Endothelial cell of umbilical vein (primary cell): ENCODE measurements at regions of chr2 and their contacts with region 1.

Region 1: DNA sequence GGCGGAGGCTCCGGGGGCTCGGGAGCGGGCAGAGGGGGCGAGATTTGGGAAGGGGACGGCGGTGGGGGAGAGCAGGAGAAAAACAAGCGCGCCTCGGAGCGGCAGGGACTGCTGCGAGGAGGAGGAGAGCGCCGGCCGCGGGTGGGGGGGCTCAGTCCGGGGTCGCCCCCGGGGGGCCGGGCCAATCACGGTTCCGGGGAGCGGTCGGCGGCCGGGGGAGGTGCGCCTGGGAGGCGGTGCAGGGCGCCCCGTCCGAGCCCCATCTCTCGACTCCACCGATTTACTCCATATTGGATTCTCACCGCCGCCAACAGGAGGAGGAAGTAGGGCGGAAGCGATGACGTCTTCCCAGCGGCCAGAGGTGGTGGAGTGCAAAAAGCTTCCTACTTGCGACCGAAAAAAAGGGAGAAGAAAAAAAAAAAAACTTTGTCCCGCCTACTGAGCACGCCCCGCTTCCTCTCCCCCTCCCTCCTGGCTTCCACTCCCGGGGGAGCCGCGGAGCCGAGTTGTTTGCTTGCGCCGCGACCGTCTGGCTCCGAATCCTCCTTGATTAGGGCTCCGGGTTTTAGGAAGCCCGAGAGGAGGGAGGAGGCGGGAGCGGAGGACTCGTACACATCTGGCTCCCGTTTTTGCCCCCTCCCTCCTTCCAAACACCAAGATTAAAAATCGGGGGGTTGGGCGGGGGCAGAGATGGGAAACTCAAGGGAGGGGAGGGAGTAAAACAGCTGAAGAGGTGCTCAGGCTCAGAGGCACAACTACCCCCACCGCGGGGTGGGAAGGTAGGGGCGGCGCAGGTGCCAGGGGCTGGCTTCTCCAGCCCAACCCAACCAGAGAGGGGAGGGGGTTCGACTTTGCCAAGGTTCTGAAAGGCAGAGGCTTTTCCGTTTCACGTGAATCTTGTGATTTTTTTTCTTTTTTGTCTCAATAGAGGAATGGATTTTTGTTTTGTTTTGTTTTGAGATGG is at the start of gene SPRED2:
- DNase-seq: peak; percentile 90
- H3K4me3 ChIP-seq: peak within 1 kb of the TSS; percentile 72 to 82 (median 73)
- H3K27ac ChIP-seq: peak within 1 kb of the TSS; percentile 7
- H3K4me1 ChIP-seq: peaks cover 17% of the 10 kb centered on the region
- H3K27me3 ChIP-seq: peaks cover 20 to 41% of the 10 kb centered on the region in 2 experiments
- CTCF ChIP-seq: no peak
- POLR2A ChIP-seq: peak; percentile 53
- total RNA-seq, gene SPRED2: 7.8 and 9.6 TPM in 2 replicates

Region 2: GRCh38 chr2:65056215-65057053 is 376.1 kb before region 1 on chr2 and contains the start of gene CEP68:
- CTCF ChIA-PET with region 1: no interaction called
- POLR2A ChIA-PET with region 1: no interaction called
- dilution Hi-C with region 1: no loop called
- intact Hi-C with region 1: loop called (anchors 2 kb)
- DNase-seq: peak; percentile 99
- H3K4me3 ChIP-seq: peak within 1 kb of the TSS; percentile 74 to 96 (median 78)
- H3K27ac ChIP-seq: peak within 1 kb of the TSS; percentile 81
- H3K4me1 ChIP-seq: peaks cover 33% of the 10 kb centered on the region
- H3K27me3 ChIP-seq: no peaks in the 10 kb centered on the region
- CTCF ChIP-seq: no peak
- POLR2A ChIP-seq: peak; percentile 95
- total RNA-seq, gene CEP68: 20.0 and 21.4 TPM in 2 replicates

Region 3: DNA sequence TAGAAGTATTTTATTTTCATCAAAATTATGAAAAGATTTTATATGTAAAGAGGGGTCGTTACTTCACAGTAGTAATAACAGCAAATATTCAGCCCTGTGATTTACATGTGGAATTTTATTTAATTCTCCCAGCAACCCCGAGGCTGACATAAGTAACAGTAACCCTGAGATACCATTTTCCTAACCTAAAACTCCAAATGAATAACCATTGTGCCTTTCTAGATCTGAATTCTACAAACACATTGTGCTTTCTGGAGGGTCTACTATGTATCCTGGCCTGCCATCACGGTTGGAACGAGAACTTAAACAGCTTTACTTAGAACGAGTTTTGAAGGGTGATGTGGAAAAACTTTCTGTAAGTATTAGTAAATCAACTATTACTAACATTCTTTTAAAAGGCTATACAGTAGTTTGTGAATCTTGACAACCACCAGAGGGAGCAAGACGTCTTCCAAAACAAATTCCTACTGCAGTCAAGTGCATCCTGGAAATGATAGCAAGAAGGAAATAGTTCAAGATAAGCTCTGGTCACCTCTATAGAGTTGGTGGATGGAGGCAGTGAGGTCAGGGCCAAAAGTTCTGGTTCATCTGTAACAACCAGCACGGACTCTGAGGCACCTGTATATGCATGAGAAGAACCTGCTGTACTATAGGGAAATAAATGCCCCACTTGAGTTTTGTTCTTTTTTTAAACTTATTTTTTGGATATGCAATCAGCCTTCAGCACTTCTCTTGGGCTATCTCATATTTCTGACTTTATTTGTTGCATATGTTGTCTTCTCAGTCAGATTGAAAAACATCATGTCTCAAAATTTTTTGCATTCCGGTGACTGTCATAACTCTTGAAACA is 167.5 kb before region 1 on chr2:
- CTCF ChIA-PET with region 1: interaction called, 20 read pairs
- POLR2A ChIA-PET with region 1: no interaction called
- dilution Hi-C with region 1: no loop called
- intact Hi-C with region 1: loop called (anchors 1 kb)
- DNase-seq: peak; percentile 73
- H3K4me3 ChIP-seq: no peak overlapping the region
- H3K27ac ChIP-seq: no peak overlapping the region
- H3K4me1 ChIP-seq: peaks cover 2% of the 10 kb centered on the region
- H3K27me3 ChIP-seq: no peaks in the 10 kb centered on the region
- CTCF ChIP-seq: peak; percentile 54 to 56
- POLR2A ChIP-seq: no peak

Region 4: GRCh38 chr2:65382776-65383357 is 49.6 kb before region 1 on chr2:
- CTCF ChIA-PET with region 1: no interaction called
- POLR2A ChIA-PET with region 1: no interaction called
- dilution Hi-C with region 1: no loop called
- intact Hi-C with region 1: loop called (anchors 1 kb)
- DNase-seq: no peak
- H3K4me3 ChIP-seq: no peak overlapping the region
- H3K27ac ChIP-seq: no peak overlapping the region
- H3K4me1 ChIP-seq: peaks cover 21% of the 10 kb centered on the region
- H3K27me3 ChIP-seq: peaks cover 59 to 60% of the 10 kb centered on the region in 2 experiments
- CTCF ChIP-seq: no peak
- POLR2A ChIP-seq: no peak

Region 5: DNA sequence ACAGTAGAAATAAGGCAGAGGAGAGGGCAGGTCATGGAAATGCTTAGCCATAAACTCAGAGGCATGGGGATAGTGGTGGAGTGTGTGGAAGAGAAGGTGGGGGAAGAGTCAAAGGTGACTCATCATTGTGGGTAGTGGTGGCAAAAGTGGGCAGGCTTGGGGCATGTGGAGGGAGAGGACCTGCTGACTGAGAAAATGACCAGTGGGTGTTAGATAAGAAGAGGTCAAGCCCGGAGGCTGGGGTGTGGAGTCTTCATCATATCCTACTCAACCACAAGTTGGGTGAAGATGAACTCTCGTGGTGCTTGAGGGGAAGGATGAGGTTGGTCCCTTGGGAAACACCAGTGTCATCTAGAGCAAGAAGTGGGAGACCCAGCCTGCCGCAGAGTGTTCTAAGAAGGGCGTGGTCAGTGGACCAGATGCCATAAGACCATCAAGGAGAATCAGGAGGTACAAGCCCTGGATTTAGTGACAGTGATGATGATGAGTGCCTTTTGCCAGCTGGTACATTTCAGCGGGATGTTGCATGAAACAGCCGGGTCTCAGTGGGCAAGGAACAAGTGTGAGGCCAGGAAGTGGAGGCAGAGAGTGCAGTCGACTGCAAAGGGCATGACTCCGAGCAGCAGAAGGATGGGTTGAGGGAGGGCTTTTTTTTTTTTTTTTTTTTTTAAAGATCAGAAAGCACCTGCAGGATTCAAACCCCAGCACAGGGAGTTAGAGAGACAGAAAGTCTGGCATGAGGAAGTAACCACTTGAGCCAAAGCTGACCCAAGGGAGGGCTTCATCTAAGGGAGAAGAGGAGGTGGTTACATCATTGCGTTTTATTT is 122.5 kb after region 1 on chr2:
- CTCF ChIA-PET with region 1: no interaction called
- POLR2A ChIA-PET with region 1: interaction called, 7 read pairs
- dilution Hi-C with region 1: no loop called
- intact Hi-C with region 1: loop called (anchors 2 kb)
- DNase-seq: no peak
- H3K4me3 ChIP-seq: no peak overlapping the region
- H3K27ac ChIP-seq: no peak overlapping the region
- H3K4me1 ChIP-seq: no peaks in the 10 kb centered on the region
- H3K27me3 ChIP-seq: peaks cover 16 to 19% of the 10 kb centered on the region in 2 experiments
- CTCF ChIP-seq: no peak
- POLR2A ChIP-seq: no peak

Region 6: GRCh38 chr2:65608466-65608865 is 176.0 kb after region 1 on chr2:
- CTCF ChIA-PET with region 1: no interaction called
- POLR2A ChIA-PET with region 1: no interaction called
- dilution Hi-C with region 1: no loop called
- intact Hi-C with region 1: no loop called
- DNase-seq: no peak
- H3K4me3 ChIP-seq: no peak overlapping the region
- H3K27ac ChIP-seq: no peak overlapping the region
- H3K4me1 ChIP-seq: no peaks in the 10 kb centered on the region
- H3K27me3 ChIP-seq: peaks cover 22% of the 10 kb centered on the region in 2 experiments
- CTCF ChIP-seq: no peak
- POLR2A ChIP-seq: no peak